Activated CD4-positive, alpha-beta T cell treated with anti-CD3 and anti-CD28 coated beads, Interleukin-2, amount 10 ng/mL, durations not matched to agents 24 days and 14 days (primary cell): ENCODE measurements at regions of chr15 and their contacts with region 1.

Region 1: GRCh38 chr15:48330855-48331795 is at the start of gene DUT:
- DNase-seq: peak; percentile 96
- H3K4me3 Mint-ChIP-seq: peak within 1 kb of the TSS; percentile 95
- H3K27ac Mint-ChIP-seq: peak within 1 kb of the TSS; percentile 94
- H3K4me1 Mint-ChIP-seq: peaks cover 29% of the 10 kb centered on the region
- H3K27me3 Mint-ChIP-seq: no peaks in the 10 kb centered on the region
- total RNA-seq, gene DUT: 259 and 273 TPM in 2 replicates

Region 2: GRCh38 chr15:48177766-48178647 is 153.1 kb before region 1 on chr15 and contains the start of gene MYEF2:
- intact Hi-C with region 1: loop called (anchors 5 kb)
- DNase-seq: peak; percentile 92
- H3K4me3 Mint-ChIP-seq: peak within 1 kb of the TSS; percentile 87
- H3K27ac Mint-ChIP-seq: peak within 1 kb of the TSS; percentile 92
- H3K4me1 Mint-ChIP-seq: peaks cover 19% of the 10 kb centered on the region
- H3K27me3 Mint-ChIP-seq: peaks cover 23% of the 10 kb centered on the region
- total RNA-seq, gene MYEF2: 24.2 and 27.5 TPM in 2 replicates

Region 3: GRCh38 chr15:48370460-48370859 is 39.3 kb after region 1 on chr15:
- intact Hi-C with region 1: no loop called
- DNase-seq: no peak
- H3K4me3 Mint-ChIP-seq: no peak overlapping the region
- H3K27ac Mint-ChIP-seq: no peak overlapping the region
- H3K4me1 Mint-ChIP-seq: no peaks in the 10 kb centered on the region
- H3K27me3 Mint-ChIP-seq: peaks cover 17% of the 10 kb centered on the region

Region 4: GRCh38 chr15:48810414-48811317 is 479.5 kb after region 1 on chr15 and contains the start of gene CEP152:
- intact Hi-C with region 1: loop called (anchors 2 kb)
- DNase-seq: peak; percentile 99
- H3K4me3 Mint-ChIP-seq: peak within 1 kb of the TSS; percentile 96
- H3K27ac Mint-ChIP-seq: peak within 1 kb of the TSS; percentile 96
- H3K4me1 Mint-ChIP-seq: peaks cover 35% of the 10 kb centered on the region
- H3K27me3 Mint-ChIP-seq: peaks cover 17% of the 10 kb centered on the region
- total RNA-seq, gene CEP152: 32.0 and 32.2 TPM in 2 replicates

Region 5: GRCh38 chr15:49046220-49047102 is 715.3 kb after region 1 on chr15 and contains the start of gene SECISBP2L:
- intact Hi-C with region 1: loop called (anchors 5 kb)
- DNase-seq: peak; percentile 97
- H3K4me3 Mint-ChIP-seq: peak within 1 kb of the TSS; percentile 98
- H3K27ac Mint-ChIP-seq: peak within 1 kb of the TSS; percentile 90
- H3K4me1 Mint-ChIP-seq: peaks cover 22% of the 10 kb centered on the region
- H3K27me3 Mint-ChIP-seq: no peaks in the 10 kb centered on the region
- total RNA-seq, gene SECISBP2L: 38.1 and 40.0 TPM in 2 replicates

Region 6: DNA sequence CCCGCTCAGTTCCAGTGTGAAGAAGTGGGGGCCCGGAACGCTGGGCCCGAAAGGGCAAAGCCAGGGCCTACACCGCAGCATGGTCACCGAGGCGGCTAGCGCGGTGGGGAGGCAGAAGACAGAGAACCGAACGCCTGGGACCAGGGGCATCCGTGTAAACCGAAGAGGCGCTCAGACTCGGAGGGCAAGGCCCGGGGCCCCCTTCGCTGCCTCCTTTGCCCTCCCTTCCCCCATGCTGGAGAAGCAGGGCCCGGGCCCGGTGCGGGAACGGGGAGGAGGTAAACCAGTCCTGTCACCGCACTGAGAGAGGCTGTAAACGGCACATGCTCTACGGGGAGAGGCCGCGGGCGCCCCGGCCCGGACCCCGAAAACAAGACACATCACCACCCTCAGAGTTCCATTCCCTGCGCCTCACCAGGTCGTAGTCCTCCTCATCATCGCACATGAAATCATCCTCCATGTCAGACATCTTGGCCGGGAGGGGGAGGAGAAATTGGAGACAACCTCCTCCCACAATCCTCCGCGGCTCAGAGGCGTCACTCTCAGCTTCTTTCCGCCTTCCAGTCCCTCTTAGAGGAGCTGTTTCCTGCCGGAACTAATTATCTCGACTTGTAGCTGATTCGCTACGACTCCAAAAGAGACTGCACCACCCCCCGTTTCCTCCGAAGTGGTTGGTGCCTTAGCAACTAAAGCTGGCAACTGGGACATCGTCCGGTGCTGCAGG is 824.1 kb after region 1 on chr15 and contains the start of gene COPS2:
- intact Hi-C with region 1: loop called (anchors 1 kb)
- DNase-seq: peak; percentile 98
- H3K4me3 Mint-ChIP-seq: peak within 1 kb of the TSS; percentile 99
- H3K27ac Mint-ChIP-seq: peak within 1 kb of the TSS; percentile 99
- H3K4me1 Mint-ChIP-seq: peaks cover 40% of the 10 kb centered on the region
- H3K27me3 Mint-ChIP-seq: peaks cover 1% of the 10 kb centered on the region
- total RNA-seq, gene COPS2: 98.6 and 99.0 TPM in 2 replicates

Region 7: GRCh38 chr15:50107591-50108408 is 1776.7 kb after region 1 on chr15:
- intact Hi-C with region 1: loop called (anchors 5 kb)
- DNase-seq: peak; percentile 82
- H3K4me3 Mint-ChIP-seq: peak overlapping the region; percentile 79
- H3K27ac Mint-ChIP-seq: peak overlapping the region; percentile 91
- H3K4me1 Mint-ChIP-seq: peaks cover 67% of the 10 kb centered on the region
- H3K27me3 Mint-ChIP-seq: no peaks in the 10 kb centered on the region